IMR-90 (cell line): ENCODE measurements at regions of chr9 and their contacts with region 1.

Region 1: DNA sequence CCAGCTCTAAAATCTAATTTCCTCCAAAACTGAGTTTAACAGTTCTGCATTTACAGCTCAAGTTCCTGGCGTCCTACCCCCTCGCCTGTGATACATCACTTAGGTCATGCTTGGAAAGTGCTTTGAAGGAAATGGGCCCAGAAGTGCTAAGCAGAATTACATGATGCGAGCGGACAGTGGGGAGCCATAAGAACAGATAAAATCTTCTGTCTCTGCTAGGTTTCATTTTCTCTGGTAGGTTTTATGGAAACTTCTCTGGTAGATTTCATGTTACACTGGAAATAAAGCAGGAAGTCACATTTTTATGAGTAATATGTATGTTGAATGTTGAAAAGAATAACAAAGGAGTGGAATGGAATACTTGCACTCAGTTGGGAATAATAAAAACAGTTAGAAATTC is 138.3 kb downstream of the ZDHHC21 start:
- DNase-seq: no peak
- ATAC-seq: no peak
- H3K4me3 ChIP-seq: no peak overlapping the region
- H3K27ac ChIP-seq: no peak overlapping the region
- H3K4me1 ChIP-seq: no peaks in the 10 kb centered on the region
- H3K27me3 ChIP-seq: no peaks in the 10 kb centered on the region
- CTCF ChIP-seq: no peak
- POLR2A ChIP-seq: no peak
- RAD21 ChIP-seq: no peak

Region 2: DNA sequence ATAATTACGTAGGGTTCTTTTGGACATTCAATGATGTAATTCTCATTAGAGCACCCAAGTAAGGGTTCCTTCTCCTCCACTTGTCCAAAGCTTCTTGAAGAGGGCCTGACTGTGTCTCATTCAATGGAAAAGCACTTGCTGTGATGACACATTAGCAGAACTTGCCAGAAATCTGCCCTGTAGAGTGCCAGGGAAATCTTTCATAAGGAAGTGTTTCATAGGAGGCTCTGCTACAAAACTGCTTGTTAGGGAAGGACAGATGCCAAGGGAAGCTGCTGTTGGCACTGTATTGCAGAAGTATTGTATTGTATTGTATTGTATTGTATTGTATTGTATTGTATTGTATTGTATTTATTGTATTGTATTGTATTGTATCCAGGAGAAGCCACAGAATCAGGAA is 1229.9 kb before region 1 on chr9:
- CTCF ChIA-PET with region 1: no interaction called
- POLR2A ChIA-PET with region 1: no interaction called
- dilution Hi-C with region 1: no loop called
- in situ Hi-C with region 1: no loop called
- intact Hi-C with region 1: loop called (anchors 10 kb)
- DNase-seq: no peak
- ATAC-seq: no peak
- H3K4me3 ChIP-seq: no peak overlapping the region
- H3K27ac ChIP-seq: no peak overlapping the region
- H3K4me1 ChIP-seq: no peaks in the 10 kb centered on the region
- H3K27me3 ChIP-seq: no peaks in the 10 kb centered on the region
- CTCF ChIP-seq: no peak
- POLR2A ChIP-seq: no peak
- RAD21 ChIP-seq: no peak

Region 3: DNA sequence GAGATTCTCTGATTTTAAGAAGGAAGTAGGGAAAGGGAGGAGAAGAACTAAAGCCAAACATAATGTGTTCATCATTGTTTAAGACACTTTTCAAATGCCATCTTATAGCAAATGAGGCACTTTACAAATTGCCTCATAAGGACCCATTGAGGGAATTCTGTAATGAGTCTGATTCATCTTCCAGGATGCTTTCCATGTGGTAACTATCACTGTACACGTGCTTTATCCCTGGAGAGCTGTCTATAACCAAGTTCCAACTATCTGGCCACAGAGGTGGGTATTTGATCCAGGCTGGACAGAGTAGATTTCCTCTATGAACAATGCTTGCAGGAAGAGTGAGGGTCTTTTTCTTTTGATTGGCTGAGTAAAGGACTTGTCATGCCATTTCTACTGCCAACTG is 57.4 kb before region 1 on chr9:
- CTCF ChIA-PET with region 1: no interaction called
- POLR2A ChIA-PET with region 1: no interaction called
- dilution Hi-C with region 1: no loop called
- in situ Hi-C with region 1: no loop called
- intact Hi-C with region 1: loop called (anchors 10 kb)
- DNase-seq: no peak
- ATAC-seq: no peak
- H3K4me3 ChIP-seq: no peak overlapping the region
- H3K27ac ChIP-seq: no peak overlapping the region
- H3K4me1 ChIP-seq: no peaks in the 10 kb centered on the region
- H3K27me3 ChIP-seq: no peaks in the 10 kb centered on the region
- CTCF ChIP-seq: no peak
- POLR2A ChIP-seq: no peak
- RAD21 ChIP-seq: no peak